Dendritic cell treated with granulocyte-macrophage colony-stimulating factor and Interleukin-4, amounts not matched to agents 40 ng/mL and 50 ng/mL, for 4 days (primary cell): ENCODE measurements at regions of chr7 and their contacts with region 1.

Region 1: GRCh38 chr7:100380196-100380595 is 6.9 kb downstream of the PILRA start:
- H3K4me3 Mint-ChIP-seq: peak overlapping the region; percentile 41
- H3K27ac Mint-ChIP-seq: peak overlapping the region; percentile 90
- H3K4me1 Mint-ChIP-seq: peaks cover 78% of the 10 kb centered on the region
- H3K27me3 Mint-ChIP-seq: no peaks in the 10 kb centered on the region

Region 2: DNA sequence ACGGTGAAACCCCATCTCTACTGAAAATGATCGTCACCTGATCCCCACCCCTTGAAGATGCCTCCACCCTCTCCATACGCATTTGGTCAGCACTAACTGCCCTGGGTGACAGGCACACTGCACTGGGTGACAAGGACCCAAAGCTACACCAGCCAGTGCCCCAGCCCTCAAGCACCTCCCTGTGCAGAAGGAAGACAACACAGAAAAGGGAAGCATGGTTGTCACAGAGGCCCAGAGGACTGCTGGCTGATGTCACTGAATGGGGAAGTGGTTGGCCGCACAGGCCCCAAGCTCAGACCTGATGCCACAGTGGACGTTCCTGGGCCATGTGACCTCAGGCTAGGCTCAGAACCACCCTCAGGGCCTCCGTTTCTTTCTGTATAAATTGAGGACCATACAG is 11.1 kb before region 1 on chr7:
- intact Hi-C with region 1: loop called (anchors 1 kb)
- H3K4me3 Mint-ChIP-seq: peak overlapping the region; percentile 9
- H3K27ac Mint-ChIP-seq: peak overlapping the region; percentile 88
- H3K4me1 Mint-ChIP-seq: peaks cover 96% of the 10 kb centered on the region
- H3K27me3 Mint-ChIP-seq: no peaks in the 10 kb centered on the region

Region 3: DNA sequence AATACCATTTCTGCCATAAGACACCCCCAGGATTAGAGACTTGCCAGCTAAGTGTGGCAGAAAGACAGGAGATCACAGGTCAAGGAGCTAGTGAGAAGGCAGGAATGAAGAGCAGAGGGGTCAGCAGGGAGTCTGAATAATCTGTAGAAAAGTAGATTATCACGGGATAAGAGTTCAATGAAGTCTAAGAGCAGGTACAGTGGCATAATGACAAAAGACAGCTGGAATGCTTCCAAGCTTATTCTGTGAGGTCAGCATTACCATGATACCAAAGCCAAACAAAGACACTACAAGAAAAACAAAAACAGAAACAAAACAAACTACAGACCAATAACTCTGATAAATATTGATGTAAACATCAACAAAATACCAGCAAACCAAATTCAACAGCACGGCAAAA is 13.9 kb after region 1 on chr7:
- intact Hi-C with region 1: loop called (anchors 1 kb)
- H3K4me3 Mint-ChIP-seq: no peak overlapping the region
- H3K27ac Mint-ChIP-seq: peak overlapping the region; percentile 57
- H3K4me1 Mint-ChIP-seq: peaks cover 84% of the 10 kb centered on the region
- H3K27me3 Mint-ChIP-seq: no peaks in the 10 kb centered on the region

Region 4: GRCh38 chr7:100428199-100428966 is 48.2 kb after region 1 on chr7 and contains the start of gene ZCWPW1:
- intact Hi-C with region 1: no loop called
- H3K4me3 Mint-ChIP-seq: peak within 1 kb of the TSS; percentile 94
- H3K27ac Mint-ChIP-seq: peak within 1 kb of the TSS; percentile 97
- H3K4me1 Mint-ChIP-seq: peaks cover 51% of the 10 kb centered on the region
- H3K27me3 Mint-ChIP-seq: no peaks in the 10 kb centered on the region

Region 5: GRCh38 chr7:100489824-100490223 is 109.6 kb after region 1 on chr7:
- intact Hi-C with region 1: no loop called
- H3K4me3 Mint-ChIP-seq: no peak overlapping the region
- H3K27ac Mint-ChIP-seq: peak overlapping the region; percentile 37
- H3K4me1 Mint-ChIP-seq: peaks cover 29% of the 10 kb centered on the region
- H3K27me3 Mint-ChIP-seq: peaks cover 62% of the 10 kb centered on the region